Prostate gland (tissue), 2 donors: ENCODE measurements at regions of chr6 and their contacts with region 1.

Region 1: GRCh38 chr6:7389451-7390225 is at the starts of genes CAGE1 and RIOK1:
- DNase-seq: peak; percentile 93
- H3K4me3 ChIP-seq: peak within 1 kb of the TSS; percentile 61 to 86
- H3K27ac ChIP-seq: peak within 1 kb of the TSS; percentile 85 to 87
- H3K4me1 ChIP-seq: peaks cover 11% of the 10 kb centered on the region
- H3K27me3 ChIP-seq: no peaks in the 10 kb centered on the region
- CTCF ChIP-seq: peak in 2 of 4 experiments; percentile 15 to 16
- POLR2A ChIP-seq: peak; percentile 75
- total RNA-seq, gene CAGE1: 0.09 to 1.2 TPM
- total RNA-seq, gene RIOK1: 17.5 to 25.8 TPM

Region 2: GRCh38 chr6:7312616-7313504 is 76.8 kb before region 1 on chr6 and contains the start of gene SSR1:
- intact Hi-C with region 1: loop called (anchors 2 kb)
- DNase-seq: peak; percentile 97
- H3K4me3 ChIP-seq: peak within 1 kb of the TSS; percentile 72 to 99
- H3K27ac ChIP-seq: peak within 1 kb of the TSS; percentile 93 to 95
- H3K4me1 ChIP-seq: no peaks in the 10 kb centered on the region
- H3K27me3 ChIP-seq: no peaks in the 10 kb centered on the region
- CTCF ChIP-seq: peak in 1 of 4 experiments; percentile 20
- POLR2A ChIP-seq: peak; percentile 84
- total RNA-seq, gene SSR1: 34.3 to 89.5 TPM

Region 3: DNA sequence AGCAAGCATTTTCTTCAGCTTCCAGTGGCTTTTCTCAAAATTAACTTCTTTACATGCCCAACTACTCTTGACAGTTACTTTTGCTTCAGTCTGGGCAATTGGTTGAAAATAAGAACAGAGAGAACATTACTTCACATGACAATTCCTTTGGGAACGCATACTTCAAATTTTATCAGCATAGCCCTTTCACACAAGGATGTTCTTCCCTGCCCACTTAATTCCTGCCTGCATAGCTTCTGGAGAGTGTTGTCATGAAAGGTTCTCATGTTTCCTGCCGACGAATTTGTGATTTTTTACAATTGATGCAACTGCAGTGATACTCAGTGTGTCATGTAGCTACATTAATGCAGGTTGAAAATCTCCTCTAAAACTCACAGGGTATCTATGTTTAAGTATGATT is 178.4 kb after region 1 on chr6:
- intact Hi-C with region 1: no loop called
- DNase-seq: no peak
- H3K4me3 ChIP-seq: no peak overlapping the region
- H3K27ac ChIP-seq: peak overlapping the region in 1 of 2 donors; percentile 20
- H3K4me1 ChIP-seq: no peaks in the 10 kb centered on the region
- H3K27me3 ChIP-seq: no peaks in the 10 kb centered on the region
- CTCF ChIP-seq: no peak
- POLR2A ChIP-seq: no peak

Region 4: DNA sequence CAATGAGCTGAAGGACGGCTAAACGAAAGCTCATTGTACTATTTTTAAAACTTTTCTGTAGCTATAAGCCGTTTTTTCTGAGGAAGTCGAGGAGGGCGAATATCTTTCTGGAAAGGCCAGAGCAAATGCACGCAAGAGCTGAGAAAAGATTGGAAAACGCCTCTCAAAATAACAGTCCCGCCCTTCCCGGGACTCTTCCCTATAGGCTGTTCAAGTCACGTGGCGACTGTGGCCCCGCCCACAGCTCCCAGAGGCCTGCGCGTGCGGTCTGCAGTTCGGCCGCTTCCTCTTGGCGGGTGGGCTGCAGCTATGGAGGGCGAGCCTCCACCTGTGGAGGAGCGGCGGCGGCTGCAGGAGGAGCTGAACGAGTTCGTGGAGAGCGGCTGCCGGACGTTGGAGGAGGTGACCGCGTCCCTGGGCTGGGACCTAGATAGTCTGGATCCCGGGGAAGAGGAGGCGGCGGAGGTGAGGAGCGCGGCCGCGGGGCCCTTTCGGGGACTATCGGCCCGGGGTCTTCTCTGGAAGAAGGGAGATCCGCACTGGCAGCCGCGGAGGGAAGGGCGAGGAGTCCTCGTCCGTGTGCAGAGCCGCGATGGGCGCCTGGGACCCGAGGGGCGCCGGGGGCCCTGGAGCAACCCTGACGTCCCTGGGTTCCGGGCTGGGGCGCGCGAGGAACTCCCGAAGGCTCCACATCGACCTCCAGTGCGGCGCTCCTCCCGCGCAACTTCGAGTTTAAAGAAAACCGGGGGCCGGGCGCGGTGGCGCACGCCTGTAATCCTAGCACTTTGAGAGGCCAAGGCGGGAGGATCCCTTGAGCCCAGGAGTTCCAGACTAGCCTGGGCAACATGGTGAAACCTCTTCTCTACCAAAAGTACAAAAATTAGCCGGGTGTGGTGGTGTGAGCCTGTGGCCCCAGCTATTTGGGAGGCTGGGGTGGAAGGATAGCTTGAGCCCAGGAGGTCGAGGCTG is 200.6 kb after region 1 on chr6 and contains the start of gene SNRNP48:
- intact Hi-C with region 1: loop called (anchors 10 kb)
- DNase-seq: peak; percentile 95
- H3K4me3 ChIP-seq: peak within 1 kb of the TSS; percentile 82 to 97
- H3K27ac ChIP-seq: peak within 1 kb of the TSS; percentile 58 to 61
- H3K4me1 ChIP-seq: no peaks in the 10 kb centered on the region
- H3K27me3 ChIP-seq: no peaks in the 10 kb centered on the region
- CTCF ChIP-seq: peak in 2 of 4 experiments; percentile 15 to 16
- POLR2A ChIP-seq: peak; percentile 84
- total RNA-seq, gene SNRNP48: 13.1 to 19.9 TPM

Region 5: GRCh38 chr6:8435160-8435852 is 1045.7 kb after region 1 on chr6 and contains the start of gene SLC35B3:
- intact Hi-C with region 1: loop called (anchors 10 kb)
- DNase-seq: peak; percentile 92
- H3K4me3 ChIP-seq: peak within 1 kb of the TSS; percentile 60 to 71
- H3K27ac ChIP-seq: peak within 1 kb of the TSS; percentile 81 to 86
- H3K4me1 ChIP-seq: no peaks in the 10 kb centered on the region
- H3K27me3 ChIP-seq: no peaks in the 10 kb centered on the region
- CTCF ChIP-seq: peak in 1 of 4 experiments; percentile 4
- POLR2A ChIP-seq: peak; percentile 92
- total RNA-seq, gene SLC35B3: 12.3 to 16.9 TPM